WTC11 (cell line): ENCODE measurements at regions of chr16 and their contacts with region 1.

Region 1: GRCh38 chr16:68448360-68448970 is at the start of gene SMPD3:
- DNase-seq: peak; percentile 100
- ATAC-seq: peak; percentile 94
- H3K4me3 Mint-ChIP-seq: peak within 1 kb of the TSS; percentile 85
- H3K27ac Mint-ChIP-seq: no peak within 1 kb of the TSS
- H3K4me1 Mint-ChIP-seq: peaks cover 10% of the 10 kb centered on the region
- H3K27me3 Mint-ChIP-seq: peaks cover 34% of the 10 kb centered on the region
- CTCF ChIP-seq: no peak
- total RNA-seq, gene SMPD3: 0.99 to 1.4 TPM (median 1.2 TPM) in 3 replicates

Region 2: DNA sequence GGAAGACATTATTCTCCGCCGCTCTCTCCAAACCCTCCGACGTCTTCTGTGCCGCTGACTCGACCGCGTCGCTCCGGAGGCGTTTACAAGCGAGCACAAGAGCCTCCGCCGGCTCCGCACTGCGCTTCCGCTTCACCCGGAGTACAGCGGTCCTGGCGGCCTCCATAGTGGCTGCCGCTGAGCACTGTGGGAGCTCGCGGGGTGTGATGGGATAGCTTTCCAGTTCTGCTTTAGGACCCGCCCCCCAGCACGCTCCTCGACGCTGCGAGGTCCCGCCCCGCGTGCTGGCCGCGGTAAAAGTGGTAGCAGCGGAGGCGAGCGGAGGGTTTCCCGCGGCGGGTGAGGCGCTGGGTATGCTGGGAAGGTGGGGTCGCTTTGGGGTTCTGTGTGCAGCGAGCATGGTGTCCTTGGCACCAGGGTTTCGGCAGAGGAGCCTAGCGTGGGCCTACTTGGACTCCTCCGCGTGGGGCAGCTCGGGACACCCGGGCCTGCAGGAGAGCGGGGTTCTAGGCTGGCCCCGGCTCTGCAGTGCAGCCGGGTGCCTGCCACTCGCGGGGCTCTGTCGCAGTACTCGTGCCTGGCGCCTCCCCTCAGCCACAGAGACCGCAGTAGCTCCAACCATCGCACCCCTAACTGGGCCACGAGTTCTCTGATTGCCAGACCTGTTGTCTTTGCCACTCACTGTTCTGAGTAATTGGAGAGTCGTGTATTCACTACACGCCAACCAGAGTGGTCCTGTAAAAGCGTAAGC is 137.5 kb before region 1 on chr16 and contains the starts of genes PRMT7 and SLC7A6OS:
- CTCF ChIA-PET with region 1: no interaction called
- POLR2A ChIA-PET with region 1: no interaction called
- DNase-seq: peak; percentile 90
- ATAC-seq: peak; percentile 99
- H3K4me3 Mint-ChIP-seq: peak within 1 kb of the TSS; percentile 95
- H3K27ac Mint-ChIP-seq: peak within 1 kb of the TSS; percentile 97
- H3K4me1 Mint-ChIP-seq: peaks cover 18% of the 10 kb centered on the region
- H3K27me3 Mint-ChIP-seq: no peaks in the 10 kb centered on the region
- CTCF ChIP-seq: no peak
- total RNA-seq, gene PRMT7: 50.3 to 59.3 TPM (median 52.5 TPM) in 3 replicates
- total RNA-seq, gene SLC7A6OS: 20.5 to 22.6 TPM (median 20.7 TPM) in 3 replicates

Region 3: GRCh38 chr16:68520649-68521086 is 72.2 kb after region 1 on chr16:
- CTCF ChIA-PET with region 1: interaction called, 10 read pairs
- POLR2A ChIA-PET with region 1: no interaction called
- DNase-seq: peak; percentile 95
- ATAC-seq: peak; percentile 99
- H3K4me3 Mint-ChIP-seq: peak overlapping the region; percentile 41
- H3K27ac Mint-ChIP-seq: no peak overlapping the region
- H3K4me1 Mint-ChIP-seq: peaks cover 3% of the 10 kb centered on the region; the same call in 1 of the 2 replicates
- H3K27me3 Mint-ChIP-seq: peaks cover 12% of the 10 kb centered on the region
- CTCF ChIP-seq: peak; percentile 95